ENCODE measurements at regions of chr6 and their contacts with region 1.

Region 1: GRCh38 chr6:22647719-22648118 is 78.4 kb downstream of the HDGFL1 start:
- DNase-seq: no peak
- ATAC-seq: no peak
- H3K4me3 ChIP-seq: no peak overlapping the region
- H3K27ac ChIP-seq: no peak overlapping the region
- H3K4me1 ChIP-seq: no peaks in the 10 kb centered on the region
- H3K27me3 ChIP-seq: no peaks in the 10 kb centered on the region
- CTCF ChIP-seq: no peak

Region 2: DNA sequence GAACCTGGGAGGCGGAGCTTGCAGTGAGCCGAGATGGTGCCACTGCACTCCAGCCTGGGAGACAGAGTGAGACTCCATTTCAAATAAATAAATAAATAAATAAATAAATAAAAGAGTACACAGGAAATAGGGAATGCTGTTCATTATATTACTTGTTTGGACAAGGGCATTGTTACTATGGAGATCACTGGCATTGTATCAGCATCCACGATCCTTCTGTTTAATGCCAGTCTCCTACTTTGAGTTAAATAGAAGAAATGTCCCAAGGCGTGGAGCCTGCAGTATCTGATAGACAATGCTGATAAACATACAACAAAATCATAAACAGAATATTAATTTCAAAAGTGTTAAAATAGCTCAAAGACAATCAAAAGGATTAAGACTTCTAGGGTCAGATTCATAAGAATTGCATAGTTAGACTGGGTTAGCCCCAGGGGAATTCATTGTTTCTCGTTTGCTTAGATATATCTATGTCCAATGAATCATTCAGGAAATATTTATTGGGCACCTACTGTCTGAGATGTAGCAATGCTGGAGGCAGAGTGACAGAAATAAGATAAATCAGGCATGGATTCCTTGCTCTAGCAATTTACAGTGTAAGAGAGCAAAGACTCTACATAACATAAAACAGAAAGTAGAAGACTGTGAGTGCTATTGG is 226.6 kb before region 1 on chr6:
- CTCF ChIA-PET with region 1: no interaction called
- POLR2A ChIA-PET with region 1: no interaction called
- in situ Hi-C with region 1: no loop called
- intact Hi-C with region 1: no loop called
- DNase-seq: no peak
- ATAC-seq: no peak
- H3K4me3 ChIP-seq: no peak overlapping the region
- H3K27ac ChIP-seq: no peak overlapping the region
- H3K4me1 ChIP-seq: no peaks in the 10 kb centered on the region
- H3K27me3 ChIP-seq: no peaks in the 10 kb centered on the region
- CTCF ChIP-seq: no peak

Region 3: GRCh38 chr6:22512686-22513427 is 134.9 kb before region 1 on chr6:
- CTCF ChIA-PET with region 1: no interaction called
- POLR2A ChIA-PET with region 1: no interaction called
- in situ Hi-C with region 1: no loop called
- intact Hi-C with region 1: no loop called
- DNase-seq: no peak
- ATAC-seq: no peak
- H3K4me3 ChIP-seq: no peak overlapping the region
- H3K27ac ChIP-seq: no peak overlapping the region
- H3K4me1 ChIP-seq: no peaks in the 10 kb centered on the region
- H3K27me3 ChIP-seq: no peaks in the 10 kb centered on the region
- CTCF ChIP-seq: no peak

Region 4: DNA sequence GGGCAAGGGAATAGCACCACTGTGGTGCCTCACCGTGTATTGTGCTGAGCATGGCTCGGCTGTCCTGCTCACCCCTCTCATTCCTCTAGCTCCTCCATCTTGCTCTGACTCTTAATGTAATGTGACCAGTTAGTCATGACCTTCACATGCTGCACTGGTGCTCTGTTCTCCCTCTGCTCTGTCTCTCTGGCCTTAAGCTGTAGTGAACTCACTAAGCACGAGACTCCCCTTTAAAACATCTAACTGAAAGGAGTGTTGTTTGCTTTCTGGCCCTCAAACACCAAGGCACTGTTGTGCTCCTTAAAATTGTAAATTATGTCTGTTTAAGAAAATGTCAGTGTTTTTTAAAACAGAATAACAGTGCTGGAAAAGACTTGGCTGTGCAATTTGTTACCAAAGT is 62.1 kb after region 1 on chr6:
- CTCF ChIA-PET with region 1: no interaction called
- POLR2A ChIA-PET with region 1: no interaction called
- in situ Hi-C with region 1: no loop called
- intact Hi-C with region 1: no loop called
- DNase-seq: no peak
- ATAC-seq: no peak
- H3K4me3 ChIP-seq: no peak overlapping the region
- H3K27ac ChIP-seq: no peak overlapping the region
- H3K4me1 ChIP-seq: no peaks in the 10 kb centered on the region
- H3K27me3 ChIP-seq: no peaks in the 10 kb centered on the region
- CTCF ChIP-seq: no peak

Region 5: DNA sequence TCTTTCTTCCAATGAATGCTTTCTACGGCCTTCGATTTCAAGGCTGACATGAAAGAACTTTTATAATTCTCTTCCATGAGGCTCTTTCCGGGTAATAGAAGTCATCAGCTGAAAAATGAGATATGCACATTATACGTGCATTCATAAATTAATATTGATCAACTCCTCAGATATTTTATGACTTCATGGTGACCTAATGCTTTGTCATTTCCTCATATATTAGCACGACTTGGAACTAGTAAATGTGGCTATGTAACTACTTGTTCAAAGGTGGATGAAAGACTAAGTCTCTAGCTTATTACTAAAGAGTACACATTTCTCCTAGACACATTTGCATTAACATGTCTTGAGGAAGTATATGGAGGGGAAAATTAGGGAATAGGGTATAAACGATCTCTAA is 90.5 kb after region 1 on chr6:
- CTCF ChIA-PET with region 1: no interaction called
- POLR2A ChIA-PET with region 1: interaction called, 24 read pairs
- in situ Hi-C with region 1: no loop called
- intact Hi-C with region 1: no loop called
- DNase-seq: no peak
- ATAC-seq: no peak
- H3K4me3 ChIP-seq: no peak overlapping the region
- H3K27ac ChIP-seq: no peak overlapping the region
- H3K4me1 ChIP-seq: no peaks in the 10 kb centered on the region
- H3K27me3 ChIP-seq: no peaks in the 10 kb centered on the region
- CTCF ChIP-seq: no peak

Measured in Panc1 (cell line).